ENCODE measurements at regions of chr11 and their contacts with region 1.

Region 1: GRCh38 chr11:36564376-36565030 is 3.3 kb upstream of the RAG1 start:
- DNase-seq: peak; percentile 34 to 54 (median 45)
- H3K4me3 ChIP-seq: peak overlapping the region; percentile 17
- H3K27ac ChIP-seq: no peak overlapping the region
- H3K4me1 ChIP-seq: peaks cover 3% of the 10 kb centered on the region
- H3K27me3 ChIP-seq: no peaks in the 10 kb centered on the region
- CTCF ChIP-seq: peak in 2 of 3 donors; percentile 30 to 33
- EP300 ChIP-seq: no peak
- POLR2A ChIP-seq: no peak

Region 2: GRCh38 chr11:36300651-36301050 is 263.9 kb before region 1 on chr11:
- intact Hi-C with region 1: no loop called
- DNase-seq: peak; percentile 28 to 60 (median 53)
- H3K4me3 ChIP-seq: no peak overlapping the region
- H3K27ac ChIP-seq: no peak overlapping the region
- H3K4me1 ChIP-seq: peaks cover 4% of the 10 kb centered on the region
- H3K27me3 ChIP-seq: no peaks in the 10 kb centered on the region
- CTCF ChIP-seq: no peak
- EP300 ChIP-seq: no peak
- POLR2A ChIP-seq: no peak

Region 3: GRCh38 chr11:36622431-36623136 is 58.1 kb after region 1 on chr11:
- intact Hi-C with region 1: loop called in 1 of 4 experiments (anchors 10 kb)
- DNase-seq: no peak
- H3K4me3 ChIP-seq: no peak overlapping the region
- H3K27ac ChIP-seq: no peak overlapping the region
- H3K4me1 ChIP-seq: peaks cover 4% of the 10 kb centered on the region
- H3K27me3 ChIP-seq: no peaks in the 10 kb centered on the region
- CTCF ChIP-seq: no peak
- EP300 ChIP-seq: no peak
- POLR2A ChIP-seq: no peak

Region 4: DNA sequence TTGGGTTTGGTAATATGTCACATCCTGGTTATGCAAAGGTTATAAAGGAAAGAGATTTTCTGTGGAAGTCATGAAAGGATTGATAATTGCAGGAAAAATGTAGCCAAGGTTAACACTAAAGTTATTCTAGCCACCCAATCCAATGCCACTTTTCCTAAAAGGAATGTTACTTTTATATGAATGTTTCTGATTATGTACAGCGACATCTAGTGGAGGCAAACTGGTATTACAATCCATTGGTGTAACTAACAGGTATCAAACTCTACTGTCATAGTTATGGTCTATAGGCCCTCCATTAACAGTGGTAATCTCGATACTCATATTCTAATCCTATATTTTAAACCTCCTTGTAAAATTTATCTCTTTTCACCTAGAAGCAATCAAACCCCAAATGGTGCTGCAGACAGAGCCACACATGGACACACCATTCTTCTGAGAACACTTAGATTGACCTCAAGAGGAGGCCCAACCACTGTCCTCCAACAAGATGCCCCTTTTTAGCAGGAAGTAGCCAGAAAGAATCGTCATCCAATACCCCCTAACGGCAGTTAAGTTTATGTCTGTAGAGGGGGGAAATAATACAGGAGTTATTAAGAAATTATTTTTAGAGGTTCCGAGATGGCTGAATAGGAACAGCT is 108.4 kb after region 1 on chr11:
- intact Hi-C with region 1: loop called in 3 of 4 experiments (anchors 5 to 10 kb)
- DNase-seq: no peak
- H3K4me3 ChIP-seq: no peak overlapping the region
- H3K27ac ChIP-seq: no peak overlapping the region
- H3K4me1 ChIP-seq: no peaks in the 10 kb centered on the region
- H3K27me3 ChIP-seq: no peaks in the 10 kb centered on the region
- CTCF ChIP-seq: peak; percentile 22 to 44 (median 30)
- EP300 ChIP-seq: no peak
- POLR2A ChIP-seq: no peak

Region 5: DNA sequence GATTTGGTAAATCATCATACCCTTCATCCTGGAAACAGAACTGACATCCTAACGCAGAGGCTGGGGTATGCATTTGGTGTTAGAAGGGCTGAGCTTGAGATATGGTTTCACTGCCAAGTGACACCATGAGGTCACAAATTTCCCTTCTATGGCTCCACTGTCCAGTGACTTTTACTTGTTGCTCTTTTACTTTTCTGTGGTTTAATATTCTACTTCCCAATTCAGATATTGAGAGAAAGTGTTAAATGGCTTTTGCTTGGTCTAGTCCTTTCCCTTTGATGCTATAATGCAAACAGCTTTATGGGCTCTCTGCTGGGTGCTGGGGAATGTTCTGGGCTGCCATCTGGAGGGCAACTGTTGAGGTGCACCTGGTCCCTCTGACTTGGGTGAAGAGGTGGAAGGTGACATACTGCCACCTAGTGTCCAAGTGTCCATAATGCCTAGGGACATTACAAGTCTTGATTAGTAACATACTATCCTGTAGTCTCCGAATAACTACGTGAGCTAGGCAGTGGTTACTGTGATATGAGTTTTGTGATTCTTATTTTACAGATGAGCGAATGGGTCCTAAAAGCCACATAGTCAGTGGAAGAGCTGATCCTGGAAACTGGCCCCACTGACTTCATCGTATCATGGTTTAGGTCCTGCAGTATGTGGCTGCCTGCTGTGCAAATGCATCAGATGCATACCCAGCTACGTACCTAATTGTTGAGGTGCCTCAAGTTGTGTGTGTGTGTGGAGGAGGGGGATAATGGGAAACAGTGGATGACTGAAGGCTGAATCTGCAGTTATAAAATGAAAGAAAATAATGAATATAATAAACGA is 182.6 kb after region 1 on chr11:
- intact Hi-C with region 1: loop called in 3 of 4 experiments (anchors 10 kb)
- DNase-seq: peak; percentile 62 to 83 (median 77)
- H3K4me3 ChIP-seq: no peak overlapping the region
- H3K27ac ChIP-seq: no peak overlapping the region
- H3K4me1 ChIP-seq: no peaks in the 10 kb centered on the region
- H3K27me3 ChIP-seq: no peaks in the 10 kb centered on the region
- CTCF ChIP-seq: peak; percentile 57 to 83 (median 75)
- EP300 ChIP-seq: no peak
- POLR2A ChIP-seq: no peak

Measured in ovary (tissue), 10 donors.